Activated CD4-positive, alpha-beta memory T cell treated with anti-CD3 and anti-CD28 coated beads, Interleukin-2, amount 10 ng/mL, durations not matched to agents 7 days and 5 days (primary cell): ENCODE measurements at regions of chr17 and their contacts with region 1.

Region 1: DNA sequence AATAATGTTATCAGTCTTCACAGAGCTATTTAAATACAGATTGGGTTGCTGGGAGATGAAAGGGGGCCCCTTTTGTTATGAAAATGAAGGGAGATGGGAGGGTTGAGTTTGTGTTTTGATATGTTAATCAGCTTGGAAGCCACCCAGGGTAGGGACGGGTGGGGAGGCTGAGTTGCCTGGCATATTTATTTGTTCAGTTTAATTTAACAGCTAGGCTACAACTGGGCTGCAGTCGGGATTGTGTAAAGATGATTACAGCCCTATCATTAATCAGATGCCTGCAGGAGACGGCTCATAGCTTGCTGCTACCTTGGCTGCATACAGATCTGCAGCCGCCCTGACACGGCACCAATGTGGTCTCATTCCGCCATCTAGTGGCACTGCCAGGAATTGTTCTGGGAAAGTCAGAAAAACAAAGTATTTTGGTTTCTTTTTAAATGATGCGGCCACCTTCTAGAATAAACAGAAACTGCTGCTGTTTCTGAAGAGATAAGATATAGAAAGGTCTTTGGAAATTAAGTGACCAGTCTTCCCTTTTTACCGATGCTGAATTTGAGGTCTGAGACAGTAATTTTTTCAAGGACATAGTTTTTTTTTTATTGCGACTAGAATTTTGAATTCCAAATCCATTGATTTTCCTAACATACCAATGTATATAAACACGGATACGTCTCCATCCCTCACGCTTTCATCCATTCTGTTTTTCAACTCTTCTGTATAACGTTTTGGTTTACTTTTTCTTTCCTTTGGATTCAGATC is 458.0 kb upstream of the ASIC2 start:
- DNase-seq: peak; percentile 73
- H3K4me3 Mint-ChIP-seq: peak overlapping the region; percentile 21
- H3K27ac Mint-ChIP-seq: no peak overlapping the region
- H3K4me1 Mint-ChIP-seq: peaks cover 6% of the 10 kb centered on the region
- H3K27me3 Mint-ChIP-seq: peaks cover 11% of the 10 kb centered on the region

Region 2: DNA sequence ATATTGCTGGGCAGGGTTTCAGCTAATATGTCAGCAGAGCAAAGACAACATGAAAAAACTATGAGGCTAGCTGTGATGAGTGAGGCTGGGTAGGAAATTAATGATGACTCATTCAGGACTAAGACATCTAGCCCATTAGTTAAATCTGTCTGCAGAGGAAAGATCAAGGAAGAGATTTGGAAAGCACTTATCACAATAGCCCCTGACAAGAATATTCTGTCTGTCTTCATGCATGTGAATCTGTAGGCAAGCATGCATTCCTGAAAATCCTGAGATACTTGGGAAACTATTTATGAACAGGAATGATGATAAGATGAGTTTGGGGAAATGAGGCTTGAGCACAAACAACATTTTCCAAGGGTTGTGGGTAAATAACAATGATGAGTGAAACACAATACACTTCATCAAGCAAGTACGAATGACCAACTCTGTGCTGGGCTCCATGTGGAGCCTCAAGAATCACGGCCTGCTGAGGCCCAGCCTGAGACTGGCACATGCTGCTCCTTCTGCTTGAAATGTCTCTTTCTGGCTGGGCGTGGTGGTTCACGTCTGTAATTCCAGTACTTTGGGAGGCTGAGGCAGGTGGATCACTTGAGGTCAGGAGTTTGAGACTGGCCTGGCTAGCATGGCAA is 361.5 kb before region 1 on chr17:
- CTCF ChIA-PET with region 1: no interaction called
- POLR2A ChIA-PET with region 1: no interaction called
- DNase-seq: no peak
- H3K4me3 Mint-ChIP-seq: no peak overlapping the region
- H3K27ac Mint-ChIP-seq: no peak overlapping the region
- H3K4me1 Mint-ChIP-seq: no peaks in the 10 kb centered on the region
- H3K27me3 Mint-ChIP-seq: no peaks in the 10 kb centered on the region

Region 3: DNA sequence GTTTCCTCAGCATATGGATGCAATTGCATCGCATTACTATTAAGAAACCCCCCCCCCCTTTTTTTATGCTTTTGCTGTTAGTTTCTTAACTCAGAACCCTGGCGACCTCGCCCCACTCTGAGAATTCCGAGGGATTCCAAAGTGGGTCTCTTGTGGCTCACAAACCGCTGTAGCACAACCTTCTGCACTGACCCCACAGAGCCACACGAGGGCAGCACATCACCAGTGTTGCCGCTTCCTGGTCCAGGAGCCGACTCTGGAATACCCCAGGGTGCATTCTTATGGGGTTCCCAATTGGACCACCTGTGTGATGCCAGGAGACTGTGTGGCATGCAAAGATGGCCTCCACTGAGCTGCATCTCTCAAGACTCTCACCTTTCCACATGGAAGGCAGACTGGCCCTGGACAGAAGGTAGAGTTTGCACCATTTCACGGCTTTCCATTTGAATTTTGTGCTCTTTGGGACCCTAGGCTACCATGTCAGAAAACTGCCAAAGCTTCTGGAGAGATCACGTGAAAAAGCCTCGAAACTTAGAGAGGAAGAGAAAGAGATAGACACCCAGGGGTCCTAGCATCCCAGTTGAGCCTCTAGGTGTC is 25.3 kb before region 1 on chr17:
- CTCF ChIA-PET with region 1: interaction called, 11 read pairs
- POLR2A ChIA-PET with region 1: no interaction called
- DNase-seq: peak; percentile 22
- H3K4me3 Mint-ChIP-seq: no peak overlapping the region
- H3K27ac Mint-ChIP-seq: no peak overlapping the region
- H3K4me1 Mint-ChIP-seq: no peaks in the 10 kb centered on the region
- H3K27me3 Mint-ChIP-seq: peaks cover 4% of the 10 kb centered on the region

Region 4: GRCh38 chr17:33779225-33779591 is 28.1 kb after region 1 on chr17:
- CTCF ChIA-PET with region 1: no interaction called
- POLR2A ChIA-PET with region 1: no interaction called
- DNase-seq: peak; percentile 40
- H3K4me3 Mint-ChIP-seq: no peak overlapping the region
- H3K27ac Mint-ChIP-seq: no peak overlapping the region
- H3K4me1 Mint-ChIP-seq: no peaks in the 10 kb centered on the region
- H3K27me3 Mint-ChIP-seq: peaks cover 2% of the 10 kb centered on the region